CD14-positive monocyte (primary cell): ENCODE measurements at regions of chr19 and their contacts with region 1.

Region 1: DNA sequence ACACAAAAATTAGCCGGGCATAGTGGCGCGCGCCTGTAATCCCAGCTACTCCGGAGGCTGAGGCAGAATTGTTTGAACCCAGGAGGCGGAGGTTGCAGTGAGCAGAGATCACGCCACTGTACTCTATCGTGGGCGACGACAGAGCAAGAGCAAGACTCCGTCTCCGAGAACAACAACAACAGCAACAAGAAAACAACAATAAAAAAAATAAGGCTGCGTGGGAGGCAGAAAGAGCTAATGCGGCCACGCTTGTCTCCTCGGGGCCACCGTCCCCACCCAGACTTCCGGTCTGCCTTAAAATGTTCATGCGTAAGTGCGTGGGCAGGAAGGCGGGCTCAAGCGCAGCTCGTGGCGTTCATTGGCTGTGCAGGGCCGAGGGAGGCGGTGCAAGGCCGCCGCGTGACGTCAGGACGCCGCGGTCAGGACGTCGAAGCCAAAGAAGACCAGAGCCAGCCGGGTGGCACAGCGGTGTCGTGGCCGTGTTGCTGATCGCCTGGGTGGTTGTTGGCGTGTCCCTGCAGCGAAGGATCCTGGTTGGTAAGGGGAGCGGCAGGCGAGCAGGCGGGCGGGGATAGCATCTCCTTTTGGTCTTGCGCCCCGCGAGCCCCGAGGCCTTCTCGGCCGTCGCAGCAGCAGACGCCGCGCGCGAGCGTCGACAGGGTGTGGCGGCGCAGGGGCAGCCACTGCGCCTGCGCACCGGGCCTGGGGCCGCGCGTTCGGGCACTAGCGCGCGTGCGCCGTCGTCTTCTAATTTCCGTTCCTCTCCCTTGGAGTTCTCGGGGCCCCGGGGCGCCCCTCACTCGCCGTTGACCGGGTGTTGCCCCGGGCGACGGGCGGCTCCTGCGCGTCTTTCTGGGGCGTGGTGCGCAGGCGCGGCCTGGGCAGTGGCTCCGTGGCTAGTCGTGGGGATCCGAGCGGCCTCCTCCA is at the start of gene LENG8:
- DNase-seq: peak; percentile 96 to 99 (median 99)
- H3K4me3 ChIP-seq: peak within 1 kb of the TSS; percentile 57 to 90 (median 69)
- H3K4me3 Mint-ChIP-seq: peak within 1 kb of the TSS; percentile 98 to 99
- H3K27ac ChIP-seq: peak within 1 kb of the TSS; percentile 95 to 98
- H3K27ac Mint-ChIP-seq: peak within 1 kb of the TSS; percentile 99 to 100 (median 100)
- H3K4me1 ChIP-seq: peaks cover 35 to 39% of the 10 kb centered on the region in 2 donors
- H3K4me1 Mint-ChIP-seq: peaks cover 35% of the 10 kb centered on the region
- H3K27me3 ChIP-seq: no peaks in the 10 kb centered on the region
- H3K27me3 Mint-ChIP-seq: peaks cover 0 to 3% (median 2%) of the 10 kb centered on the region in 3 donors
- CTCF ChIP-seq: no peak
- polyA plus RNA-seq, gene LENG8: 3.6 to 341 (median 5.8) TPM

Region 2: GRCh38 chr19:54373781-54374631 is 75.0 kb before region 1 on chr19:
- intact Hi-C with region 1: loop called in 1 of 2 experiments (anchors 2 kb)
- DNase-seq: peak; percentile 96 to 99 (median 98)
- H3K4me3 ChIP-seq: peak overlapping the region in 1 of 3 experiments; percentile 58
- H3K4me3 Mint-ChIP-seq: peak overlapping the region; percentile 71 to 74
- H3K27ac ChIP-seq: peak overlapping the region; percentile 93 to 98
- H3K27ac Mint-ChIP-seq: peak overlapping the region; percentile 96 to 99 (median 98)
- H3K4me1 ChIP-seq: peaks cover 91 to 96% of the 10 kb centered on the region in 2 donors
- H3K4me1 Mint-ChIP-seq: peaks cover 82% of the 10 kb centered on the region
- H3K27me3 ChIP-seq: no peaks in the 10 kb centered on the region
- H3K27me3 Mint-ChIP-seq: peaks cover 0 to 4% (median 0%) of the 10 kb centered on the region in 3 donors
- CTCF ChIP-seq: no peak

Region 3: GRCh38 chr19:54403054-54403453 is 46.0 kb before region 1 on chr19:
- intact Hi-C with region 1: no loop called
- DNase-seq: no peak
- H3K4me3 ChIP-seq: no peak overlapping the region
- H3K4me3 Mint-ChIP-seq: no peak overlapping the region
- H3K27ac ChIP-seq: no peak overlapping the region
- H3K27ac Mint-ChIP-seq: no peak overlapping the region
- H3K4me1 ChIP-seq: no peaks in the 10 kb centered on the region
- H3K4me1 Mint-ChIP-seq: no peaks in the 10 kb centered on the region
- H3K27me3 ChIP-seq: no peaks in the 10 kb centered on the region
- H3K27me3 Mint-ChIP-seq: peaks cover 4 to 11% (median 6%) of the 10 kb centered on the region in 3 donors
- CTCF ChIP-seq: no peak

Region 4: DNA sequence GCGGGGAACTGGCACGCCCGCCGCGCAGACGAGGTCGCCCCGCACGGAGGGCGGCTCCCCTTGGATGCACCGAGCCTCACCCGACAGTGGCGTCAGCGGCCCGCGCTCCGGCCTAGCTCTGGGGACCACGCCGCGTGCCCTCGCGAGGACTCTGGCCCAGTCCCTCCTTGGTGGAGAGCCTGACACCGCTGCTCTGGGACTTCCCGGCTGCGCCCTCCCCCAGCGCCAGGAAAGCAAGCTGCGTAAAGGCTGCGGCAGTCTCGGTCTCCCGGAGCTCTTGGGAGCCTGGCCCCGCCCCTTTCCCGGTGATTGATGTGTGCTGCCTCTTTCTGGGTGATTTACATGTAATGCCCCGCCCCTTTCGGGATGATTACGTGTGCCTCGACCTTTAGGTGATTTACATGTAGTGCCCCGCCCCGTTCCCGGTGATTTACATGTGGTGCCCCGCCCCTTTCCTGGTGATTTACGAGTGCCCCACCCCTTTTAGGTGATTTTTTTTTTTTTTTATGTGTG is 14.6 kb after region 1 on chr19 and contains the start of gene LENG9:
- intact Hi-C with region 1: loop called in 1 of 2 experiments (anchors 2 kb)
- DNase-seq: peak; percentile 98 to 99 (median 98)
- H3K4me3 ChIP-seq: peak within 1 kb of the TSS; percentile 47 to 89 (median 66)
- H3K4me3 Mint-ChIP-seq: peak within 1 kb of the TSS; percentile 85 to 92
- H3K27ac ChIP-seq: peak within 1 kb of the TSS; percentile 83 to 87
- H3K27ac Mint-ChIP-seq: peak within 1 kb of the TSS; percentile 94 to 98 (median 96)
- H3K4me1 ChIP-seq: peaks cover 33 to 42% of the 10 kb centered on the region in 2 donors
- H3K4me1 Mint-ChIP-seq: peaks cover 32% of the 10 kb centered on the region
- H3K27me3 ChIP-seq: peaks cover 0 to 25% of the 10 kb centered on the region in 2 donors
- H3K27me3 Mint-ChIP-seq: peaks cover 18 to 33% (median 30%) of the 10 kb centered on the region in 3 donors
- CTCF ChIP-seq: no peak
- polyA plus RNA-seq, gene LENG9: 0.15 to 2.0 TPM in 2 of 3 donors, not detected in the other

Region 5: GRCh38 chr19:54481322-54481930 is 32.4 kb after region 1 on chr19:
- intact Hi-C with region 1: no loop called
- DNase-seq: peak in 2 of 3 donors; percentile 34 to 51
- H3K4me3 ChIP-seq: no peak overlapping the region
- H3K4me3 Mint-ChIP-seq: peak overlapping the region in 1 of 2 donors; percentile 82
- H3K27ac ChIP-seq: no peak overlapping the region
- H3K27ac Mint-ChIP-seq: peak overlapping the region in 5 of 7 donors; percentile 13 to 77 (median 53)
- H3K4me1 ChIP-seq: peaks cover 24 to 33% of the 10 kb centered on the region in 2 donors
- H3K4me1 Mint-ChIP-seq: peaks cover 34% of the 10 kb centered on the region
- H3K27me3 ChIP-seq: peaks cover 47 to 83% of the 10 kb centered on the region in 2 donors
- H3K27me3 Mint-ChIP-seq: peaks cover 70 to 84% (median 76%) of the 10 kb centered on the region in 3 donors
- CTCF ChIP-seq: peak; percentile 84

Region 6: DNA sequence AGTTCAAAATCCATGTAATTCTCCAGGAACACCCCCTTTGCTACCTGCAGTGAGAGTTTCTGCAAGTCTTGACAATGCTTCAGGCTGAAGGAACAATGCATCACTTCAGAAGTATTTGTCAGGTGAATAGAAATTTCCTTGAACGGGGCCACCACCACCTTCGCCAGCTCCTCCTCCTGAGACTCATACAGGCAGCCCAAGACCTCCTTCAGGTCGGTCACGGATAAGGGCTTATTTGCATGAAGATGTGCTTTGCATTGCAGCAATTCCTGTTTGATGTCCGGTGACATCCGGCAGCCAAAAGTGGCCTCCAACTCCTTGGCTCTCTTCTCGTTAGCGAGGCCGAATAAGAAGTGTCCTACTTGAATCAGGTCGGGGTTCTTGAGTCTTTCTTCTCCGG is 489.9 kb after region 1 on chr19:
- intact Hi-C with region 1: no loop called
- DNase-seq: no peak
- H3K4me3 ChIP-seq: no peak overlapping the region
- H3K4me3 Mint-ChIP-seq: peak overlapping the region in 1 of 2 donors; percentile 18
- H3K27ac ChIP-seq: no peak overlapping the region
- H3K27ac Mint-ChIP-seq: no peak overlapping the region
- H3K4me1 ChIP-seq: peaks cover 0 to 6% of the 10 kb centered on the region in 2 donors
- H3K4me1 Mint-ChIP-seq: peaks cover 10% of the 10 kb centered on the region
- H3K27me3 ChIP-seq: peaks cover 0 to 17% of the 10 kb centered on the region in 2 donors
- H3K27me3 Mint-ChIP-seq: peaks cover 32 to 54% (median 39%) of the 10 kb centered on the region in 3 donors
- CTCF ChIP-seq: no peak

Region 7: GRCh38 chr19:55407800-55408532 is 958.9 kb after region 1 on chr19:
- intact Hi-C with region 1: no loop called
- DNase-seq: peak; percentile 99 to 100 (median 100)
- H3K4me3 ChIP-seq: peak overlapping the region; percentile 32 to 86 (median 37)
- H3K4me3 Mint-ChIP-seq: peak overlapping the region; percentile 84 to 91
- H3K27ac ChIP-seq: peak overlapping the region; percentile 95 to 96
- H3K27ac Mint-ChIP-seq: peak overlapping the region; percentile 96 to 98 (median 97)
- H3K4me1 ChIP-seq: peaks cover 22 to 31% of the 10 kb centered on the region in 2 donors
- H3K4me1 Mint-ChIP-seq: peaks cover 26% of the 10 kb centered on the region
- H3K27me3 ChIP-seq: no peaks in the 10 kb centered on the region
- H3K27me3 Mint-ChIP-seq: peaks cover 3 to 6% (median 4%) of the 10 kb centered on the region in 3 donors
- CTCF ChIP-seq: no peak